Caco-2 (cell line): ENCODE measurements at regions of chr3 and their contacts with region 1.

Region 1: DNA sequence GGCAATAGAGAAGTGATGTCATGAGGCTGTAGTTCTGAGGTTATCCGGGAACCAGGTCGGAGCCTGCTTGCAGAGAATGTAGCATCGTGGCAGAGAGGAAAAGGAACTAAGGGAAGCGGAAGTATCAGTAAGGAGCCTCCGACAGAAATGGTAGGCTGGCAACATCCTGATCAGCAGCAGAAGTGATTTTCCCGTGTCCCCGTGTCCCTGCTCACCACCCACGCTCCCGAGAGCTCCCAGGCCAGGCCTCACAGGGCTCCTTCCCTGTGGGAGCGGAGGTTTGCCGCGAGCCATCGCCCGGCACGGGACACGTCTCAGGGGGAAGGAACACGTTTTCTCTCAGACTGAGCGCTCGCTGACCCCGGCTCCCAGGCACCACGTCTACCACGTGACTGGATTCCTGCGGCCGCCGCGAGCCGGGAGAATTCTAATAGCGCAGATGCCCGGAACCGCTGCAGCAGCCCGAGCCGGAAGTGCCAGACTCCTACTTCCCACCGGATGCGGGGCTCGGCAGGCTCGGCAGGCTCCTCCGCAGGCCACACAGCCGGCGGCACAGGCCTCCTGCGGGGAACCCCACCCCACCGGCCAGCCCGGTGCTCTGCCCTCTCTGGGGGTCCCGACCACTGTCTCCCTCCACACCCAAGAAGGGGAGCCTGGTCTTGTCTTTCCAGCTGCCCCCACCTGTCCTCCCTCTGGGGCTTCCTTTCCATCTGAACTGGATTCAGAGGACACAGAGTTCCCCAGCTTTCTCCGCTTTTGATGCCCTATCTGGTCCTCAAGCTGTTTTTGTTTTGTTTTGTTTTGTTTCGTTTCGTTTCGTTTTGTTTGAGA is 99.3 kb downstream of the BDH1 start:
- DNase-seq: peak; percentile 89 to 90
- H3K4me3 ChIP-seq: peak overlapping the region; percentile 54
- H3K4me3 Mint-ChIP-seq: peak overlapping the region; percentile 87
- H3K27ac Mint-ChIP-seq: peak overlapping the region; percentile 90
- H3K4me1 ChIP-seq: peaks cover 31% of the 10 kb centered on the region
- H3K4me1 Mint-ChIP-seq: peaks cover 18% of the 10 kb centered on the region
- H3K27me3 ChIP-seq: no peaks in the 10 kb centered on the region
- H3K27me3 Mint-ChIP-seq: no peaks in the 10 kb centered on the region
- CTCF ChIP-seq: no peak

Region 2: GRCh38 chr3:197256836-197257444 is 199.5 kb before region 1 on chr3:
- CTCF ChIA-PET with region 1: interaction called, 11 read pairs
- POLR2A ChIA-PET with region 1: no interaction called
- intact Hi-C with region 1: loop called (anchors 1 kb)
- DNase-seq: peak in 1 of 2 experiments; percentile 49
- H3K4me3 ChIP-seq: no peak overlapping the region
- H3K4me3 Mint-ChIP-seq: no peak overlapping the region
- H3K27ac Mint-ChIP-seq: no peak overlapping the region
- H3K4me1 ChIP-seq: no peaks in the 10 kb centered on the region
- H3K4me1 Mint-ChIP-seq: peaks cover 18% of the 10 kb centered on the region
- H3K27me3 ChIP-seq: no peaks in the 10 kb centered on the region
- H3K27me3 Mint-ChIP-seq: no peaks in the 10 kb centered on the region
- CTCF ChIP-seq: peak; percentile 51 to 58

Region 3: DNA sequence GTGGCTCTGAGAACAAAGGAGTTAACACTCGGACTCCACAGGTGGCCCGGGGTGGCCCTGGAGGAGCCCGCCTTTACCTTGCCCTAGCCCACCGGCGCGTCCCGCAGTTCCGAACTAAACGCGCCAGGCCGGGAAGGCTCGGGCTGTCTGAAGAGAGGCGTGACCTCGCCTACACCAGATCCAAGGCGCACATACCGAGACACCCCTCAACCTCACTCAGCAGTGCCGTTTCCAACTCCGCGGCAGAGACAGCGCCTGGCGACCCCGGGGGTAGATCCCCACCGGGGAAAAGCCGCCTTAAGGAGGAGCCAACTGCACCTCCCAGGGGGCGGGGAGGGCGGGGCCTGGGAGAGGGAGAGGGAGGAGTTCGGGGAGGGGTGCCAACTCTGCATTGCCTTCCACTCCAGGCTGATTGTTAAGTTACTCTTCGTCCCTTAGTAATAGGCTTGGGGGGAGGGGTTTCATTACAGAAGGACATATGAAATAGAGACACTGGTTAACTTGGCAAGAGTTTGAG is 158.1 kb before region 1 on chr3 and contains the start of gene DLG1:
- CTCF ChIA-PET with region 1: interaction called, 5 read pairs
- POLR2A ChIA-PET with region 1: no interaction called
- intact Hi-C with region 1: loop called (anchors 2 kb)
- DNase-seq: peak; percentile 85 to 95
- H3K4me3 ChIP-seq: peak within 1 kb of the TSS; percentile 88
- H3K4me3 Mint-ChIP-seq: peak within 1 kb of the TSS; percentile 73
- H3K27ac Mint-ChIP-seq: peak within 1 kb of the TSS; percentile 95
- H3K4me1 ChIP-seq: peaks cover 29% of the 10 kb centered on the region
- H3K4me1 Mint-ChIP-seq: peaks cover 23% of the 10 kb centered on the region
- H3K27me3 ChIP-seq: no peaks in the 10 kb centered on the region
- H3K27me3 Mint-ChIP-seq: no peaks in the 10 kb centered on the region
- CTCF ChIP-seq: no peak
- total RNA-seq, gene DLG1: 167 and 170 TPM in 2 replicates

Region 4: DNA sequence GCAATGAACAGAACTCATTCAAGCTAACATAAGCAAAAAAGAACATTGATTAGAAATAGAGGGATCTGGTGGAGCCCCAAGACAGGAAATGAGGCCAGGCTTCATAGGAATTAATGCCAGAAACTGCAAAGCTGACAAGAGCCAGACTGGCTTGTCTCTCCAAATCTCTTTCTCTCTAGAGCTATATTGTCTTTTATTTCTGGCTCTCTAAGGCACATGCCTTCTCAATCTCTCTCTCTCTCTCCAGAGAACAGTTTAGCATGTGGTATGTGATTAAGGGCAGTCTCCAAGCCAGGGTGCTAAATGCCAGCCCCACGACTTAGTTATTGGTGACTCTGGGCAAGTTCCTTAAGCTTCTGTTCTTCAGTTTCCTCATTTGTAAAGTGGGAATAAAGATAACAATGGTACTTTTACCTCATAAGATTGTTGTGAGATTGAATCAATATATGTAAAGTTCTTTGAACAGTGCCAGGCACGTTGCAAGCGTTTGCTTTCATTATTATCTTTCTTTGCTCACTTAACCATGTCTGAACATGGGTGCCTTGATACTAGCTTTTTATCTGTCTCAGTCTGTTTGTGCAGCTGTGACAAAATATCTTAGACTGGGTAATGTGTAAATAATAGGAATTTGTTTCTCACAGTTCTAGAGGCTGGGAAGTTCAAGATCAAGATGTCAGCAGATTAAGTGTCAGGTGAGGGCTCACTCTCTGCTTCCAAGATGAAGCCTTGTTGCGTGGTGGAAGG is 23.9 kb before region 1 on chr3:
- CTCF ChIA-PET with region 1: interaction called, 3 read pairs
- POLR2A ChIA-PET with region 1: interaction called, 10 read pairs
- intact Hi-C with region 1: no loop called
- DNase-seq: no peak
- H3K4me3 ChIP-seq: no peak overlapping the region
- H3K4me3 Mint-ChIP-seq: no peak overlapping the region
- H3K27ac Mint-ChIP-seq: no peak overlapping the region
- H3K4me1 ChIP-seq: peaks cover 21% of the 10 kb centered on the region
- H3K4me1 Mint-ChIP-seq: peaks cover 33% of the 10 kb centered on the region
- H3K27me3 ChIP-seq: no peaks in the 10 kb centered on the region
- H3K27me3 Mint-ChIP-seq: no peaks in the 10 kb centered on the region
- CTCF ChIP-seq: no peak

Region 5: DNA sequence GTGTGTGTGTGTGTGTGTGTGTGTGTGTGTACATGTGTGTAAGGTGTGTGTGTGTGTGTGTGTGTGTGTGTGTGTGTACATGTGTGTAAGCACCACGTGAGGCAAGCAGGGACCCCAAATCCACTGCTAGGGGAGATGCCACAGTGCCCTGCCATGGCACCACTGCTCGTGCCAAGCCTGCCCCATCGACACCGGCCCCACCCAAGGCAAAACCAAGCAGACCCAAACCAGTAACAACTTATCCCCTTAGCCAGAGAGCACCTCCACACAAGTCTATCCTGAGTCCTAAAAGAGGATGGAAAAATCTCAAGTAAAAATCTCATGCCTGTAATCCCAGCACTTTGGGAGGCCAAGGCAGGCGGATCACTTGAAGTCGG is 54.2 kb after region 1 on chr3:
- CTCF ChIA-PET with region 1: no interaction called
- POLR2A ChIA-PET with region 1: no interaction called
- intact Hi-C with region 1: loop called (anchors 1 kb)
- DNase-seq: no peak
- H3K4me3 ChIP-seq: no peak overlapping the region
- H3K4me3 Mint-ChIP-seq: no peak overlapping the region
- H3K27ac Mint-ChIP-seq: peak overlapping the region; percentile 72
- H3K4me1 ChIP-seq: peaks cover 8% of the 10 kb centered on the region; the same call in 1 of the 2 replicates
- H3K4me1 Mint-ChIP-seq: peaks cover 14% of the 10 kb centered on the region
- H3K27me3 ChIP-seq: no peaks in the 10 kb centered on the region; the same call in 1 of the 2 replicates
- H3K27me3 Mint-ChIP-seq: no peaks in the 10 kb centered on the region
- CTCF ChIP-seq: no peak